ENCODE measurements at regions of chr5 and their contacts with region 1.

Region 1: DNA sequence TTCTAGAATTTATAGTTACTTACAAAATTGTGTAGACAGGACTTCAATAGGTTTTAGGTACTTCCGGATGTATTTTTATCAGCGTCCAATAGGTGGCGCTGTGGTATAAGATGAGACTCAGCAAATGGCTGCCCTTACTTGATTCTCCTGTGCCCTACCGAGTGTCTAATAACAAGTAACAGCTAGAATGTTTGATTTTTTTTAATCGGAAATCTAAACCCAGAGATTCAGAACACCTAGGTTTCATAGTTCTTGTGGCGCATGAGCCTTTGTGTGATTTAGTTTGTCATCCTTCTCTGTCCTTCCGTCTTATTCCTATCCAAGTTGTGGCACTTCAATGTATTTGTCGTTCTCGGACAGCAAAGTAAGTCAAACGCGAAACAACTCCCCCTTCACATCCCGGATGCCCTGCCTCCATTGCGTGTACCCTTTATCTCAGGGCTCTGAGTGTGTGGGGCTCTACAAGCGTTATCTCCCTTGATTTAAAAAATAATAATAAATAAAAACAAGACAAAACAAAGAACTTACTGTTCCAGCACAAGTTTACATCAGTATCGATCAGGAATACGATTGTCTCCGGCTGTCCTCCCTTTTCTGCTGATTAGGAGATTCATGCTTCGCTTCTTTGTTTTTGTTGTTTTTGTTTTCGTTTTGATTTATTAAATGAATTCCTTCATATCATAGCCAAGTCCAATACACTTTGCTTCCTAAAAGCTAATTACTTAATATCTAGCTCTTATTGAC is 50.7 kb upstream of the SLC30A5 start:
- DNase-seq: peak; percentile 86
- ATAC-seq: peak; percentile 97
- H3K4me3 Mint-ChIP-seq: peak overlapping the region; percentile 70
- H3K27ac Mint-ChIP-seq: peak overlapping the region; percentile 78
- H3K4me1 Mint-ChIP-seq: peaks cover 15% of the 10 kb centered on the region
- H3K27me3 Mint-ChIP-seq: no peaks in the 10 kb centered on the region

Region 2: DNA sequence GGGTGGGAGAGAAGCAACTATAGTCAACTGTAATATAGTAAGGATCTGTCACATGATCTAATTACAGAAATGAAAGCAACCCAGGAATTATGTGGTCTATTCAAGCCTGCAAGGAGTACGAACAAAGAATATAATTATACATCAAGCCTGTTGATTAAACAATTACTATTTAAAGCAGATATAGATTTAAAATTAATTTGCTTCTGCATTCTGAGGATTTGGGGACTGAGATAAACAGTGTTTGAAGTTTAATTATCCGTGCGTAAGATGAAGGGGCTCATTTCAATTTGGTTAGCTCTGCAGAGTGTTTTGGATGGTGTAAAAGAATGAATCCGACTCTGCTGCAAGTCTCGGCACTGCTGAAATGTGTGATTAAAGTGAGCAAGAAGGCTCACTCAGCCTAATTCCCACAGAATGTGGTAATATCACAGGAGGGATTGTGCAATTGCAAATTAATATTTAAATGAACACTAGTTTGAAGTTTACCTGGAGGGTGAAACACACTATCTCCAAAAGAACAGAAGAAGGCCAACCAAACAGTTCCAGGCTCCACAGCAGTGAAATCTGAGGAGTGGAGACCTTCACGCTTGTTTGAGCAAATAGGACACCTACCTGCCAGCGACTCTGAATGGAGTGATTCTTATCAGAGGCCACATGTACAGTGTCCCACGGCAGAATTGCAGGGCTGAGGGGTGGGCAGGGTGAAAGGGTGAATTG is 369.8 kb before region 1 on chr5:
- CTCF ChIA-PET with region 1: no interaction called
- POLR2A ChIA-PET with region 1: no interaction called
- intact Hi-C with region 1: no loop called
- DNase-seq: no peak
- ATAC-seq: no peak
- H3K4me3 Mint-ChIP-seq: no peak overlapping the region
- H3K27ac Mint-ChIP-seq: no peak overlapping the region
- H3K4me1 Mint-ChIP-seq: peaks cover 4% of the 10 kb centered on the region
- H3K27me3 Mint-ChIP-seq: no peaks in the 10 kb centered on the region

Region 3: GRCh38 chr5:69024241-69024651 is 18.8 kb before region 1 on chr5:
- CTCF ChIA-PET with region 1: interaction called, 10 read pairs
- POLR2A ChIA-PET with region 1: no interaction called
- intact Hi-C with region 1: no loop called
- DNase-seq: peak; percentile 35
- ATAC-seq: peak; percentile 90
- H3K4me3 Mint-ChIP-seq: no peak overlapping the region
- H3K27ac Mint-ChIP-seq: no peak overlapping the region
- H3K4me1 Mint-ChIP-seq: no peaks in the 10 kb centered on the region
- H3K27me3 Mint-ChIP-seq: peaks cover 7% of the 10 kb centered on the region

Region 4: GRCh38 chr5:69138766-69139165 is 95.7 kb after region 1 on chr5:
- CTCF ChIA-PET with region 1: no interaction called
- POLR2A ChIA-PET with region 1: no interaction called
- intact Hi-C with region 1: no loop called
- DNase-seq: no peak
- ATAC-seq: no peak
- H3K4me3 Mint-ChIP-seq: no peak overlapping the region
- H3K27ac Mint-ChIP-seq: no peak overlapping the region
- H3K4me1 Mint-ChIP-seq: no peaks in the 10 kb centered on the region
- H3K27me3 Mint-ChIP-seq: no peaks in the 10 kb centered on the region

Region 5: GRCh38 chr5:69156496-69156895 is 113.4 kb after region 1 on chr5:
- CTCF ChIA-PET with region 1: no interaction called
- POLR2A ChIA-PET with region 1: no interaction called
- intact Hi-C with region 1: no loop called
- DNase-seq: no peak
- ATAC-seq: no peak
- H3K4me3 Mint-ChIP-seq: no peak overlapping the region
- H3K27ac Mint-ChIP-seq: no peak overlapping the region
- H3K4me1 Mint-ChIP-seq: no peaks in the 10 kb centered on the region
- H3K27me3 Mint-ChIP-seq: no peaks in the 10 kb centered on the region

Region 6: GRCh38 chr5:69166686-69167492 is 123.8 kb after region 1 on chr5 and contains the start of gene CCNB1:
- CTCF ChIA-PET with region 1: no interaction called
- POLR2A ChIA-PET with region 1: no interaction called
- intact Hi-C with region 1: loop called in 1 of 2 experiments (anchors 1 kb)
- DNase-seq: peak; percentile 99
- ATAC-seq: peak; percentile 100
- H3K4me3 Mint-ChIP-seq: peak within 1 kb of the TSS; percentile 94
- H3K27ac Mint-ChIP-seq: peak within 1 kb of the TSS; percentile 81
- H3K4me1 Mint-ChIP-seq: peaks cover 17% of the 10 kb centered on the region
- H3K27me3 Mint-ChIP-seq: no peaks in the 10 kb centered on the region
- total RNA-seq, gene CCNB1: 163 to 205 TPM

Region 7: GRCh38 chr5:69189162-69190086 is 146.3 kb after region 1 on chr5 and contains the start of gene CENPH:
- CTCF ChIA-PET with region 1: interaction called, 3 read pairs
- POLR2A ChIA-PET with region 1: no interaction called
- intact Hi-C with region 1: loop called in 1 of 2 experiments (anchors 2 kb)
- DNase-seq: peak; percentile 95
- ATAC-seq: peak; percentile 90
- H3K4me3 Mint-ChIP-seq: peak within 1 kb of the TSS; percentile 96
- H3K27ac Mint-ChIP-seq: peak within 1 kb of the TSS; percentile 99
- H3K4me1 Mint-ChIP-seq: peaks cover 8% of the 10 kb centered on the region
- H3K27me3 Mint-ChIP-seq: no peaks in the 10 kb centered on the region
- total RNA-seq, gene CENPH: 96.0 to 98.3 TPM

Region 8: DNA sequence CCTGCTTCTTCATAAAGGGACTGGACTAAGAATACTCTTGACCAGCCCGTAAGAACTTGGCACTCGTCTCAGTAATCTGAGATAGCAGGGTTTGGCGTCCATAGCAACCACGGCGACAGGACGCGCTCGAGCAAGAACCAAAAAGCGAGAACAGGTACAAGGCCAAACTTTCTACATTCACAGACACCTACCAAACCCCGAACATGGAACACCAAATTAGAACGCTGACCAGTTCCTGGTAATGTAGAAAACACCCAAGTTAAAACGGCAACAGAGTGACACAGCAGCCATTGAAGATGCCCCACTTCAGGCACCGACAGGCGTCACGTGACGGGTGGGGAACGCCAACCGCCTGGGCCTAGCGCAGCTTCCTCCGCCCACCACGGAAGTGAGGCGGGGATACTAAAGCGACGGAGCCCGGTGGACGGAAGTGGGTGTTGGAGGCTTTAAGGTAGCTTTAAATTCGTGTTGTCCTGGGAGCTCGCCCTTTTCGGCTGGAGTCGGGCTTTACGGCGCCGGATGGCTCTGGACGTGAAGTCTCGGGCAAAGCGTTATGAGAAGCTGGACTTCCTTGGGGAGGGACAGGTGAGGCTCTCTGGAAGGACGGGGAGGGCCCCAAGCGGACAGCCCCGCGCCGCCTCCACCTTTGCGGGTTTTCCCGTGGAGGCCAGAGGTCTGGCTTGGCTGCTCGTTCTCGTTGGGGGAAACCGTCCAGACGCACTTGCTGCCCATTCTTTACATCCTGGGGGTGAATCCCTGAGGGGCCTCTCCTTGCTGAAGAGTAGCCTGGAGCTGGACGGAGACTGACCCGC is 191.6 kb after region 1 on chr5 and contains the start of gene CDK7:
- CTCF ChIA-PET with region 1: no interaction called
- POLR2A ChIA-PET with region 1: no interaction called
- intact Hi-C with region 1: loop called in 1 of 2 experiments (anchors 5 kb)
- DNase-seq: peak; percentile 96
- ATAC-seq: peak; percentile 100
- H3K4me3 Mint-ChIP-seq: peak within 1 kb of the TSS; percentile 80
- H3K27ac Mint-ChIP-seq: peak within 1 kb of the TSS; percentile 88
- H3K4me1 Mint-ChIP-seq: peaks cover 35% of the 10 kb centered on the region
- H3K27me3 Mint-ChIP-seq: no peaks in the 10 kb centered on the region
- total RNA-seq, gene CDK7: 47.0 to 47.8 TPM

Measured in activated CD4-positive, alpha-beta T cell treated with anti-CD3 and anti-CD28 coated beads for 36 hours (primary cell).